MCF 10A (cell line): ENCODE measurements at regions of chrX and their contacts with region 1.

Region 1: DNA sequence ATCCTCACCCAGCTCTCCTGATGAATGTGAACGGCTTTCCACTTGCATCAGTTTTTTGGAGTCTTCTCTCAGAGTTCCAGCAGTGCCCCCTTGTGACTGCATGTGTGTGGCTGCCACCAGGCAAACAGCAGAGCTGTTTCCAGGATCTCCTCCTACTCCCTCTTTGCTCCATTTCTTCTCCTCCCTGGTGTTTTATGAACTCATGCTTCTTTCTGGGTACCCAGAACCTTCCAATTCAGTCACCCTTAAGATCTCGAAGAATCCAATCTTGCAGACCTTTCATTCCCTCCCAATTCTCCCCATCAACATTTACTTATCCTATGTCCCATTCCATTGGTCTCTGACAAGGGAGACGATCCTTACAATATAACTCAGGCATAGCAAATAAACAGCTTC is 6.8 kb upstream of the TCEANC start:
- DNase-seq: peak; percentile 77
- H3K4me3 Mint-ChIP-seq: no peak overlapping the region
- H3K27ac Mint-ChIP-seq: no peak overlapping the region
- H3K4me1 Mint-ChIP-seq: peaks cover 8% of the 10 kb centered on the region
- H3K27me3 Mint-ChIP-seq: peaks cover 55% of the 10 kb centered on the region
- CTCF ChIP-seq: peak; percentile 54

Region 2: DNA sequence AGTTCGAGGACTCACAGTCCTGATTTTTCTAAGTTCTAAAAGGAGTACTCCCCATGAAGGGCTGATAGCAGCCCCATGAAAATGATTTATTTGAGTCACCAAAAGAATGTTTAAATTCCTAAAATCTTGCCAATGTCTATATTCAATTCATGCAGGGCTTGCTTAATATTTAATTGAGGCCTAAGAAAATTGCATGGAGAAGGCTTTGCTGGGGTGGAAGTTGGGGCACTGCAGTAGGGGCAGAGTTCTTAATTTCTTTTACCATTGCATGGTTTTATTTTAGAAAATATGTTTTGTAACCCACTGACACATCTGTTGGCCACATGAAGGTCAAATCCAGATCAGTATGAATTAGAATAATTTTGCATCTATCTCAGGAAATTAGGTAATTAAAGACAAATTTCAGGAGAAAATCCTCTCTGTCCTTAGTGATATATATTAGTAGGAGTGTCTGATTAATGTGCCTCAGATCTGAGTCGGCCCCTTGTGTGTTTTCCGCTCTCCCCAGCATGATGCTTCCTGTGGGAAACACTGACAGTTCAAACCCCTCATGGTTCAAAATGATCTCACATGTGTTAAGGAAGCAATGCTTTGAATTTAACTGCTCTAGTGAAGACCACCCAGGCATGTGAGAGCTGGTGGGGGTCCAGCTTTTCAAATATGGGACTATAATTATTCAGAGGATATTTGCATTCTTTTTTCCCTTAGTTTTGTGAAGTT is 130.8 kb before region 1 on chrX:
- CTCF ChIA-PET with region 1: interaction called, 185 read pairs
- POLR2A ChIA-PET with region 1: no interaction called
- intact Hi-C with region 1: no loop called
- DNase-seq: no peak
- H3K4me3 Mint-ChIP-seq: no peak overlapping the region
- H3K27ac Mint-ChIP-seq: no peak overlapping the region
- H3K4me1 Mint-ChIP-seq: no peaks in the 10 kb centered on the region
- H3K27me3 Mint-ChIP-seq: peaks cover 53% of the 10 kb centered on the region
- CTCF ChIP-seq: no peak

Region 3: GRCh38 chrX:13520936-13521335 is 125.2 kb before region 1 on chrX:
- CTCF ChIA-PET with region 1: interaction called, 29 read pairs
- POLR2A ChIA-PET with region 1: no interaction called
- intact Hi-C with region 1: no loop called
- DNase-seq: no peak
- H3K4me3 Mint-ChIP-seq: no peak overlapping the region
- H3K27ac Mint-ChIP-seq: no peak overlapping the region
- H3K4me1 Mint-ChIP-seq: no peaks in the 10 kb centered on the region
- H3K27me3 Mint-ChIP-seq: peaks cover 88% of the 10 kb centered on the region
- CTCF ChIP-seq: no peak

Region 4: GRCh38 chrX:14228611-14229010 is 582.5 kb after region 1 on chrX:
- CTCF ChIA-PET with region 1: no interaction called
- POLR2A ChIA-PET with region 1: no interaction called
- intact Hi-C with region 1: no loop called
- DNase-seq: peak; percentile 38
- H3K4me3 Mint-ChIP-seq: no peak overlapping the region
- H3K27ac Mint-ChIP-seq: no peak overlapping the region
- H3K4me1 Mint-ChIP-seq: no peaks in the 10 kb centered on the region
- H3K27me3 Mint-ChIP-seq: peaks cover 46% of the 10 kb centered on the region
- CTCF ChIP-seq: no peak